WTC11 (cell line): ENCODE measurements at regions of chr1 and their contacts with region 1.

Region 1: GRCh38 chr1:205284343-205285144 is 37.0 kb downstream of the NUAK2 start:
- DNase-seq: peak; percentile 80
- ATAC-seq: peak; percentile 89
- H3K4me3 Mint-ChIP-seq: no peak overlapping the region
- H3K27ac Mint-ChIP-seq: peak overlapping the region; percentile 90
- H3K4me1 Mint-ChIP-seq: peaks cover 49% of the 10 kb centered on the region
- H3K27me3 Mint-ChIP-seq: no peaks in the 10 kb centered on the region
- CTCF ChIP-seq: no peak

Region 2: GRCh38 chr1:205095422-205095821 is 189.1 kb before region 1 on chr1:
- CTCF ChIA-PET with region 1: no interaction called
- POLR2A ChIA-PET with region 1: no interaction called
- DNase-seq: no peak
- ATAC-seq: no peak
- H3K4me3 Mint-ChIP-seq: no peak overlapping the region
- H3K27ac Mint-ChIP-seq: no peak overlapping the region
- H3K4me1 Mint-ChIP-seq: no peaks in the 10 kb centered on the region
- H3K27me3 Mint-ChIP-seq: no peaks in the 10 kb centered on the region
- CTCF ChIP-seq: no peak

Region 3: DNA sequence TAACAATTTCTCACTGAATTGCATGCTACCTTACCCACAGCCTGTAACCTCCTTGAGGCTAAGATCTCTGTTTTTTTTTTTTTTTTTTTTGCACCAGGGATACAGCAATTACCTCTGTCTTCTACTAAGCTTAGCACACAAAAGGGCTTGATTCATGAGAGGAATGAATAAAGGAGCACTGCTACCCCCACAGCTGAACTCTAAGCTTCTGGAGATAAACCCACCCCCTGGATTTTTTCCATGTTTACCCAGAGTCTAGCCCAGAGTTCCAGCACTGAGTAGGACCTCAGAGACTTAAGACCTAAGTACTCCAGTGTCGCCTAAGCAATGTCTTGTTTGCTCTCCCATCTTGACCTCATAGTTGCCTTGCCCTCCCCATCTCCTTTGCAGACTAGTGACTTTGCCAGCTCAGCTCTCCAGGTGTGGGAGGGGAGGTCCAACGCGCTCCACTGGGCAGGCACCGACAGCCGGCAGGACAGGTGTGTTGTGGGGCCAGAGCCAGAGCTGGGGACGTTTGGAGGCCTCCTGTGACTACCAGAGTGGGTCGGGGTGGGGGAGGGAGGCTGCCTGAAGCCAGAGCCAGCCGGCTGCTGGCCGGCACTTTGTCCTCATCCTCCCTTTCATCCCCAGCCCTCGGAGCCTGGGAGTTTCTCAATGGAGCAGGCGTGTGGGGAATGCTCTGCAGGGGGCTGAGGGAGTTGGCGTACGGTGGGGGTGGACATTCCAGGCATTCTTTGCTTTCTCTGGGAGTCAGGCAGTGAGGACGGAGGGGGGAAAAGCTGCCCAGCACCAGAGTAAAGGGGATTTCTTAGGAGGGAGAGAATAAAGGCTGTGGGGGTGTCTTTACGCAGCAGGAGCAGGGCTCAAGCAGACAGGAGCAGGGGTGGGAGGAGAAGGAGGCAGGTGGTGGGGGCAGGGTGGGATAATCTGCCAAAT is 16.6 kb after region 1 on chr1:
- CTCF ChIA-PET with region 1: interaction called, 12 read pairs
- POLR2A ChIA-PET with region 1: interaction called, 54 read pairs
- DNase-seq: peak; percentile 98
- ATAC-seq: peak; percentile 83
- H3K4me3 Mint-ChIP-seq: peak overlapping the region; percentile 54
- H3K27ac Mint-ChIP-seq: peak overlapping the region; percentile 100
- H3K4me1 Mint-ChIP-seq: peaks cover 63% of the 10 kb centered on the region
- H3K27me3 Mint-ChIP-seq: no peaks in the 10 kb centered on the region
- CTCF ChIP-seq: no peak